MCF 10A (cell line): ENCODE measurements at regions of chr3 and their contacts with region 1.

Region 1: DNA sequence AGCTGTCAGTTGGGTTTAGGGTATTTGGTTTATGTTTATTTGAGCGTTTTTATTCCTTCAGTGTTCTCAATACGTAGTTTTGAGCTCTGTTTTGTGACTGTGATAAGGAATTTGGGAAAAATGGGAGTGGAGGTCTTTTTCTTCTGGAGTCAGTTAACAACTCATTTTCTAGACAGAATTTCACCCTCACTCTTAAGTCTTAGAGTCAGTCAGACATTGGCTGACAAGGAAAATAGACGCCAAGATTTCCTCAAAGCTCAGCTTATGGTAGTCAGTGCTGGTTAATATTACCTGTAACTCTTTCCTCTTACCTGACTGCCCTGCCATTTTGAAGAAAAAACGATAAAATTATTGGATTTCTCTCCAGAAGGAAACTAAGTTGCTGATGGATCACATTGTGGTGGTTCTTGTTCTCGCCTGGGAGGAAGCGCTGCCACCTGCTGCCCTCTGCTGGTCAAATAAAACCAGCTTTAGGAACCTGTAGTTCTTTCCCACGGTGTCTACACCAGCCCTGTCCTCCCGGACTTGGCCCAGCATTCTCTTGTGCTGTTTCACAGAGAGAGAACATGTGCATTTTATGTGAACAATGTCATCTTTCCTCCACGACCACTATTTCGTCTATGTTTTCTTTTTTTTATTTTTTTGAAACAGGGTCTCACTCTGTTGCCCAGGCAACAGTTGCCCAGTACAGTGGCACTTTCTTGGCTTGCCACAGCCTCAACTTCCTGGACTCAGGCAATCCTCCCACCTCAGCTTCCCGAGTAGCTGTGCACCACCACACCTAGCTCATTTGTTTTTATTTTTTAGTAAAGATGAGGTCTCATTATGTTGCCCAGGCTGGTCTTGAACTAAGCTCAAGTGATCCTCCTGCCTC is 41.4 kb upstream of the UMPS start:
- DNase-seq: peak; percentile 79
- H3K4me3 Mint-ChIP-seq: no peak overlapping the region
- H3K27ac Mint-ChIP-seq: no peak overlapping the region
- H3K4me1 Mint-ChIP-seq: peaks cover 4% of the 10 kb centered on the region
- H3K27me3 Mint-ChIP-seq: no peaks in the 10 kb centered on the region
- CTCF ChIP-seq: peak; percentile 72

Region 2: DNA sequence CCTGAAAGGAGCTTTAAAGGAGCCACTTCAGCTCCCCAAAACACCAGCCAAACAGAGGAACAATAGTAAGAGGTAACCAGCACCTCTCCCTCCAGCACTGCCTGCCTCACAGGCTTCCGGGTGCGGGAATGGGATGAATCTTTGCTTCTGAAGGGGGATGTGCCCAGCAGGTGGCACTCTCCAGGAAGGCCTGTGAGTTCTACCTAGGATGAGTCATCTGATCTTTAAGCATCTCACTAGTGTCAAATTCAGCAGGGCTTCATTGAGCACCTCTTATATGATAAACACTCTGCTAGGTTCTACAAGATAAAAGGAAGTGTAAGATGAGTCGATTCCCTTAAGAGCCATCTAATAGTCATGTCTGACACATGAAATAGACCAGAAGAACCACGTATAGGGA is 196.0 kb before region 1 on chr3:
- CTCF ChIA-PET with region 1: interaction called, 6 read pairs
- POLR2A ChIA-PET with region 1: no interaction called
- intact Hi-C with region 1: loop called (anchors 10 kb)
- DNase-seq: peak; percentile 83
- H3K4me3 Mint-ChIP-seq: no peak overlapping the region
- H3K27ac Mint-ChIP-seq: no peak overlapping the region
- H3K4me1 Mint-ChIP-seq: peaks cover 5% of the 10 kb centered on the region
- H3K27me3 Mint-ChIP-seq: peaks cover 20% of the 10 kb centered on the region
- CTCF ChIP-seq: peak; percentile 67

Region 3: GRCh38 chr3:124552239-124552638 is 136.6 kb before region 1 on chr3:
- CTCF ChIA-PET with region 1: interaction called, 372 read pairs
- POLR2A ChIA-PET with region 1: no interaction called
- intact Hi-C with region 1: no loop called
- DNase-seq: peak; percentile 89
- H3K4me3 Mint-ChIP-seq: no peak overlapping the region
- H3K27ac Mint-ChIP-seq: no peak overlapping the region
- H3K4me1 Mint-ChIP-seq: peaks cover 8% of the 10 kb centered on the region
- H3K27me3 Mint-ChIP-seq: peaks cover 80% of the 10 kb centered on the region
- CTCF ChIP-seq: no peak

Region 4: DNA sequence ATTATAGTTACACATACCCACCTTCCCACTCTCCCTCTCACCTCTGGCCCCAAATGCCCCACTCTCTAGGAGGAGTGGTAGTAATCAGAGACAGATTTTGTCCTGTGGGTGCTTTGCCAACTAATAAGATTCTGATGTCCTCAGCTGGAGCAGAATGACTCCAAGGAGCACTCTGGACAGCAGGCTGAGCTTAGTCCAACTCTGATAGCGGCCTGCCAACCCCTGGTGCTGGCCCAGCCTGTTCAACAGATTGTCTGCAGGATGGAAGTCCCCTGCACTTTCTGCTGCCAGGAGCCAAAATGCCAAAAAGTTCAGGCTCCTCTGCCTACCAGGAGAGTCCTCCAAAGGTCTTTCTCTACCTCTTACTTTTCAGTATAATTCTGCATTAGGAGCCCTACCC is 119.1 kb before region 1 on chr3:
- CTCF ChIA-PET with region 1: interaction called, 372 read pairs
- POLR2A ChIA-PET with region 1: interaction called, 10 read pairs
- intact Hi-C with region 1: loop called (anchors 1 kb)
- DNase-seq: no peak
- H3K4me3 Mint-ChIP-seq: no peak overlapping the region
- H3K27ac Mint-ChIP-seq: no peak overlapping the region
- H3K4me1 Mint-ChIP-seq: peaks cover 6% of the 10 kb centered on the region
- H3K27me3 Mint-ChIP-seq: peaks cover 55% of the 10 kb centered on the region
- CTCF ChIP-seq: no peak

Region 5: GRCh38 chr3:124576565-124577493 is 112.0 kb before region 1 on chr3:
- CTCF ChIA-PET with region 1: interaction called, 48 read pairs
- POLR2A ChIA-PET with region 1: no interaction called
- intact Hi-C with region 1: no loop called
- DNase-seq: no peak
- H3K4me3 Mint-ChIP-seq: no peak overlapping the region
- H3K27ac Mint-ChIP-seq: no peak overlapping the region
- H3K4me1 Mint-ChIP-seq: peaks cover 6% of the 10 kb centered on the region
- H3K27me3 Mint-ChIP-seq: no peaks in the 10 kb centered on the region
- CTCF ChIP-seq: no peak

Region 6: DNA sequence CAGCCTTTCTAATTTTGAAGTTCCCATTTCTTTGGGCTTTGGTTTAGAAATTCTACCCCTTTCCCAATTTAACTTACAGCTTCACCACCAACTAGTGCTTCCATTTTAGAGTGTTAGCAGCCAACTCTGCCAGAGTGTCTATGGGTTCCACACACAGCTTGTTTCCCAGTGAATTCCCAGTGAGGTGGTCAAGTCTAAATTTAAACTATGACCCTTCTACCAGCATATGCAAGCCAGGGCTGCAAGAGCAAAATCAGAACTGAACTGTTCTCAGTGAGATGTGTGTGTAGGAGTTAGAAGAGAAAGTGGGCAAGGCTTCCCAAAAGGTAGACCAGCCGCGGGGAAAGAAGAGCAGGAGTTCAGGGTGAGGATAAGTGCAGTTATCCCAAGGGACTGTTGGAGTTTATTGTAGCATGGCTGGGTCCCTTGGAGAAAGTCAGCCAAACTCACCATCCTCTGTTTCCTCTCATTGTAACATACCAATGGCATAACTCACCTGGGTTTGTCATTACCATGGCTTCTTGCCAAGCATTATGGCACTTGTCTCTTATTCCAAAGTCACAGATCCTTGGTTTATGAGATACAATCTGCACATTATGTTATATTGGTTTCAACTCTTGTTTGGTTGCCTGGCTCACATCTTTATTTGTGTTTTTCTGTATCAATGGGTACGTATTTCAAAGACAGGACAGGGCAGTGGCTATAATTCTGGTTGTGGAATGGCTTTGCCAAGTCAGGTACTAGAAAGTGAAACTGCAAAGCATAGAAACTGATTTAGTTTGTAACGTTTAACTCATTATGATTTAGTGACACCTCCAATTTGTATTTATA is 88.8 kb before region 1 on chr3:
- CTCF ChIA-PET with region 1: interaction called, 12 read pairs
- POLR2A ChIA-PET with region 1: interaction called, 3 read pairs
- intact Hi-C with region 1: no loop called
- DNase-seq: peak; percentile 60
- H3K4me3 Mint-ChIP-seq: no peak overlapping the region
- H3K27ac Mint-ChIP-seq: no peak overlapping the region
- H3K4me1 Mint-ChIP-seq: peaks cover 21% of the 10 kb centered on the region
- H3K27me3 Mint-ChIP-seq: peaks cover 20% of the 10 kb centered on the region
- CTCF ChIP-seq: no peak

Region 7: DNA sequence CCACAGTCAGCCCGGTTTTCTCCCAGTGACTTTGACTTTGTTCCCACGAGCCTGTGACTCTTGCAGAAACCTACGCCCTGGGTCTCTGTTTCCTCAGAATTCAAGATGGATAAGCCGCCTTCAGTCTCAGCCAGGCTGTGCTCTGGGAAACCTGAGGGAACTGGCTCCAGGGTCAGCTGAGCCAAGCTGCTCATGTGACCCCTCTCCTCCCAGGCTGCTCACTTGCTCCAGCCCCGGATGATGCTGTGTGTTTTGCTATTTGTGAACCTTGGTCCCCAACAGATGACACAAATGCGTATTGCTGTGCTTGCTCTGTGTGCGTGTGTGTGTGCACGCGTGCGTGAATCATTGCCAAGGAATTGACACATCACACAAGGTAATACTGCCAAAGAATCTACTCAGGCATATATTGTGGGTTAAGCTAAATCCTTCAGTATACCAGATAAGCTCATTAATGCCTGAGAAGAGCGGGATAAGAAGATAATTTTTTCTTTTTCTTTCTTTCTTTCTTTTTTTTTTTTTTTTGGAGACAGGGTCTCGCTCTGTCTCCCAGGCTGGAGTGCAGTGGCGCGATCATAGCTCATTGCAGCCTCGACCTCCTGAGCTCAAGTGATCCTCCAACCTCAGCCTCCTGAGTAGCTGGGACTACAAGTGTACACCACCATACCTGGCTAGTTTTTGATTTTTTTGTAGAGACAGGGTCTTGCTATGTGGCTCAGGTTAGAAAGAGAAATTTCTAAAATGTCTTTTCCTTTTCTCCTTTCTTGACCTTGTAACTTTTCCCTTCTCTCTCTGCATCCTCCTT is 12.3 kb after region 1 on chr3:
- CTCF ChIA-PET with region 1: interaction called, 10 read pairs
- POLR2A ChIA-PET with region 1: no interaction called
- intact Hi-C with region 1: no loop called
- DNase-seq: peak; percentile 54
- H3K4me3 Mint-ChIP-seq: no peak overlapping the region
- H3K27ac Mint-ChIP-seq: no peak overlapping the region
- H3K4me1 Mint-ChIP-seq: no peaks in the 10 kb centered on the region
- H3K27me3 Mint-ChIP-seq: peaks cover 23% of the 10 kb centered on the region
- CTCF ChIP-seq: no peak

Region 8: DNA sequence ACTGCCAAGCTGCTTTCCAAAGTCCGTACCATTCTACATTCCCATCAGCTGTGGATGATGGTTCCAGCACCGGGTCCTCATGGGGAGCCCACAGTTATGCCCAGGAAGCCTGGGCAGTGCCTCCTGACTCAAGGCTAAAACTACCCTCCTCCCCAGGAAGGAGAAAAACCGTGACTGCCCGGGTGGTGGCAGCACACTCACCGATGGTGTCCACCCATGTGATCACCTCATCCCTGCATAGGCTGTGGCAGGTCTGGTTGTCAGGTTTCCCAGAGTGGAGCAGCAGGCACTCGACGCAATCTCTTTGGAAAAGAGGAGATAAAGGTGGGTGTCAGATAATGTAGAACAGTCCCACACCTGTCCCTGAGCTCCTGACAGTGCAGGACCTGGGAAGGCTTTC is 80.0 kb after region 1 on chr3:
- CTCF ChIA-PET with region 1: no interaction called
- POLR2A ChIA-PET with region 1: no interaction called
- intact Hi-C with region 1: no loop called
- DNase-seq: peak; percentile 56
- H3K4me3 Mint-ChIP-seq: no peak overlapping the region
- H3K27ac Mint-ChIP-seq: no peak overlapping the region
- H3K4me1 Mint-ChIP-seq: no peaks in the 10 kb centered on the region
- H3K27me3 Mint-ChIP-seq: no peaks in the 10 kb centered on the region
- CTCF ChIP-seq: peak; percentile 43